Ascending aorta (tissue), 2 donors: ENCODE measurements at regions of chr5 and their contacts with region 1.

Region 1: DNA sequence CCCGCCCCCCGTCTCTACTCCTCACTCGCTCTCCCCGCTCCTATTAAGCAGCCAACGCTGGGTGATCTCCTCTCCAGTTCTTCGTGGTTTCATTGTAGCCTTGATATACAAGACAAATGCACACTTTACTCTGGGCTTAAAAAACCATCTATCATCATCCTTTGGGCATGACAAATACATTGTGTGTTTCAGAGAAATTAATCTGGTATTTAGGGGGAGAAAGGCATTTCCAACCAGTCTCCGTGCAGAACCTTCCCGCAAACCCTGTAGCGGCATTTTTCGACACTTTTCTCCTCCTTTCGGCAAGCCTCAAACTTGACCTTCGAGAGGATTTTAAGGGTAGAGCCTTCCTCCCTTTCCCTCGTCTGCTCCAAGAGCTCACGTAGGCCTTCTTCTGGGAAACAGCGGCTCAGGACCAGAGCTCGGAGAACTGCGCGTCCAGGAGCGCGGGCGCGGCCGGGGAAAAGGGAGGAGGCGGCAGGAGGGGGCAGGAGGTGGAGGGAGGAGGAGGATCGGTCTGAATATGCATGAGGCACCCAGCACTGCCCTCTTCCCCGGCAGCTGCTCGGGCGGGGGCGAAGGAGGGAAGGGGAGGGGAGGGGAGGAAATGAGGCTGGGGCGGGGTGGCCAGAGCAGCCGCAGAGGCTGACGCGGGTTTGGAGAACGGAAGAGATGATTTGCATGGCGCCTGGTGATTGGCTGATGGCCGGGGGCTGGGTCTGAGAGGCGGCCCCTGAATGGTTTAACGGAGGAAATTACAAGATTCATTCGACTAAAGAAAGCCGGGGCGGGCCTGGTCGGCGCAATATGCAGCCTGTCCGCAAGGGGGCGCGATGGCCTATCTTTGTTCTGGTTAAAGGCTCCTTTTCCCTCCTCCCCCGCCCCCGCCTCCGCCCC is 127.5 kb downstream of the TMEM161B start:
- DNase-seq: peak; percentile 91 to 99
- H3K4me3 ChIP-seq: peak overlapping the region; percentile 51 to 63
- H3K27ac ChIP-seq: peak overlapping the region in 1 of 2 donors; percentile 63
- H3K4me1 ChIP-seq: no peaks in the 10 kb centered on the region
- H3K27me3 ChIP-seq: no peaks in the 10 kb centered on the region
- CTCF ChIP-seq: peak; percentile 51 to 85 (median 83)

Region 2: GRCh38 chr5:87412630-87413342 is 728.3 kb before region 1 on chr5 and contains the start of gene CCNH:
- intact Hi-C with region 1: loop called (anchors 5 kb)
- DNase-seq: peak; percentile 96 to 99
- H3K4me3 ChIP-seq: peak within 1 kb of the TSS; percentile 78 to 79
- H3K27ac ChIP-seq: peak within 1 kb of the TSS; percentile 95 to 98
- H3K4me1 ChIP-seq: peaks cover 0 to 2% of the 10 kb centered on the region in 2 donors
- H3K27me3 ChIP-seq: no peaks in the 10 kb centered on the region
- CTCF ChIP-seq: no peak
- total RNA-seq, gene CCNH: 65.7 TPM

Region 3: GRCh38 chr5:87780831-87781760 is 360.0 kb before region 1 on chr5:
- intact Hi-C with region 1: loop called (anchors 5 kb)
- DNase-seq: peak in 1 of 2 donors; percentile 78
- H3K4me3 ChIP-seq: no peak overlapping the region
- H3K27ac ChIP-seq: no peak overlapping the region
- H3K4me1 ChIP-seq: no peaks in the 10 kb centered on the region
- H3K27me3 ChIP-seq: no peaks in the 10 kb centered on the region
- CTCF ChIP-seq: peak; percentile 70 to 87 (median 74)

Region 4: GRCh38 chr5:88268385-88269184 is 127.5 kb after region 1 on chr5 and contains the start of gene TMEM161B:
- intact Hi-C with region 1: loop called (anchors 2 kb)
- DNase-seq: peak; percentile 35 to 90
- H3K4me3 ChIP-seq: peak within 1 kb of the TSS; percentile 79 to 85
- H3K27ac ChIP-seq: peak within 1 kb of the TSS; percentile 66 to 79
- H3K4me1 ChIP-seq: peaks cover 0 to 10% of the 10 kb centered on the region in 2 donors
- H3K27me3 ChIP-seq: no peaks in the 10 kb centered on the region
- CTCF ChIP-seq: no peak
- total RNA-seq, gene TMEM161B: 3.7 TPM

Region 5: GRCh38 chr5:88660947-88661805 is 520.1 kb after region 1 on chr5:
- intact Hi-C with region 1: loop called (anchors 2 kb)
- DNase-seq: peak in 1 of 2 donors; percentile 81
- H3K4me3 ChIP-seq: peak overlapping the region; percentile 36 to 60
- H3K27ac ChIP-seq: no peak overlapping the region
- H3K4me1 ChIP-seq: peaks cover 0 to 7% of the 10 kb centered on the region in 2 donors
- H3K27me3 ChIP-seq: peaks cover 11% of the 10 kb centered on the region
- CTCF ChIP-seq: no peak

Region 6: DNA sequence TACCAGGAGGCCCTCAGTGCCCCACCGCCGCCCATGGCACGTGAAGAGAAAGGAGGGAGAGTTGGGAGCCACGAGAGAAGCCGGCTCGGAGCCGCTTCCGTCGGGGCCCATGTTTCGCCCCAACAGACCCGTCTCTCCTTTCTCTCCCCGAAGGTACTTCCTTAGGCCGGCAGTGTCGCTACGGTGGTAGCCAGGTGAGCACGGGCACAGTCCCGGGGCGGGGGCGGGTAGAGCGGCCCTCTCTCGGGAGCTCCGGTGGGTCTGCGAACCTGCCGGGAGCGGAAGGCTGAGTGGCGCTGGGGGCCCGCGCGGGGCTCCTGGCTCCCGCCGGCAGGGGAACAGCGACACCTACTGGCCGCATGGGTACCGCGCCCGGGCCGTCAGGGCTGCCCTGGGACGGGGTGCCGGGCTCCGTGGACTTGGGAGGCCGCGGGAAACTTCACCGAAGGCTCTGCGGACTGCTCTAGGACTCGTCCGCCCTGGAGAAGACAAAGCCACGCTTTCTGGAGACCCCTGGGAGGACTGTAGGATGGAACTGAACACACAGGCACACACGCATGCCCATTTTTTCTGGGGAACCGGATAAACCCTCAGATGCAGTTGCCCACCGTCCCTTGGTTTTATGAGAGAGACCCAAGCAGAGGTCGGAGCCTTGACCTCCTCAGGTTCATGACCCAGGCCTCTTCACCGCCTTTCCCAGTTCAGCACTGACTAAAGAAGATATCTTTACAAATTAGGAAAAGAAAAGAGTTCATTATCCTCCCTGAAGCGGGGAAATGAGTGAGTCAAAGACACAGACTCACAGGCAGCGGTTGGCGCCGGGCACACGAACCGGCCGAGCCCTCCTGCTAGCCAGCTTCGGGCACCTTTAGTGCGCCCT is 539.4 kb after region 1 on chr5:
- intact Hi-C with region 1: loop called (anchors 5 kb)
- DNase-seq: no peak
- H3K4me3 ChIP-seq: peak overlapping the region; percentile 55 to 56
- H3K27ac ChIP-seq: no peak overlapping the region
- H3K4me1 ChIP-seq: peaks cover 0 to 6% of the 10 kb centered on the region in 2 donors
- H3K27me3 ChIP-seq: peaks cover 66% of the 10 kb centered on the region
- CTCF ChIP-seq: peak; percentile 74 to 94 (median 87)